ENCODE measurements at regions of chr19 and their contacts with region 1.

Region 1: DNA sequence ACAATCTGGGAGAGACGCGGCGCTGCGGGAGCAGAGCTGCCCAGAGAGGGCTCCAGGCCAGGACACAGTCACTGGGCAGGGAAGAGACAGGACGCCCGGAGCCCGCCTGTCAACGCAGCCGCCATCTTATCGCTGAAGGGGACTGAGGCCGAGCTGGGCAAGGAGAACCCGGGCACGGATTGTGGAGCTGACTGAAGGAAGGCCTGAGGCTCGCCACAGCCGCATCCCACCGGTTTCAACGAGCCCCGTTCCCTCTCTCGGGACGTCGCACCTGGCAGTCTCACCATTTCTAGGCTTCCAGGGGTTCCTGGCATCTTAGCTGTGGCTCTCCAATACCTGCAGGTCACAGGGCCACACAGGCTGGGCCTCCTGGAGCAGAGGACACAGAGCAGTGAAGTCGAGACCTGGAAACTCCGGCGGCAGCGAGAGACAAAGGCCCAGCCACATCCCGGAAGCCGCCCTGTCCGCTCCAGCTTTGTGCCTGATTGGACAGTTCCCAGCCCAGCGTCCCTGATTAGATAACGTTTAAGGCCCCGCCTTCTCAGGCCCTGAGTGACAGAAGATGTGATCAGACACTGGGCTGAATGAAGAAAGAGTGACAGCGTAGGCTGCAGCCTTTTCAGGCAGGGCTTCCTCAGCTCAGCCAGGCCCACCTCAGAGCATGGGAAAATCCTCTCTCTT is at the start of gene ZNF91:
- DNase-seq: peak; percentile 80
- H3K4me3 ChIP-seq: peak within 1 kb of the TSS; percentile 56
- H3K27ac ChIP-seq: peak within 1 kb of the TSS; percentile 85
- H3K4me1 ChIP-seq: no peaks in the 10 kb centered on the region
- H3K27me3 ChIP-seq: no peaks in the 10 kb centered on the region
- CTCF ChIP-seq: no peak
- total RNA-seq, gene ZNF91: 7.0 and 8.9 TPM in 2 replicates

Region 2: DNA sequence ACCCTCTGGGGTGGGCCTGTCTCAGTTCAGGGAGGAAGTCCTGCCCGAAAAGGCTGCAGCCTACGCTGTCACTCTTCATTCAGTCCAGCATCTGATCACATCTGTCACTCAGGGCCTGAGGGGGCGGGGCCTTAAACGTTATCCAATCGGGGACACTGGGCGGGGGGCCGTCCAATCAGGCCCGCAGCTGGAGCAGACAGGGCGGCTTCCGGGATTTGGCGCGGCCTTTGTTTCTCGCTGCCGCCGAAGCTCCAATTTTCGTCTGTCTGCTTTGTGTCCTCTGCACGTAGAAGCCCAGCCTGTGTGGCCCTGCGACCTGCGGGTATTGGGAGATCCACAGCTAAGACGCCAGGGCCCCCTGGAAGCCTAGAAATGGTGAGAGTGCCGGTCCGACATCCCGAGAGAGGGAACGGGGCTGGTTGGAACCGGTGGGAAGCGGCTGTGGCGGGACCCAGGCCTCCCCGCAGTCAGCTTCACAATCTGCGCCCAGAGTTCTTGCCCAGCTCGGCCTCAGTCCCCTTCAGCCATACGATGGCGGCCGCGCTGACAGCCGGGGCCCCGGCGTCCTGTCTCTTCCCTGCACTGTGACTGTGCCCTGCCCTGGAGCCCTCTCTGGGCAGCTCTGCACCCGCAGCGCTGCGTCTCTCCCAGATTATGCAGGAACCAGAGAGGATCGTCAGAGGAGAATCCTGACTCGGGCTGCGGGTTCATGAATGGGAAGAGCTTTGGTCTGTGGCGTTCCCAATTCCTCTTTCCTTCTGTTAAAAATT is 278.2 kb before region 1 on chr19 and contains the start of gene ZNF730:
- CTCF ChIA-PET with region 1: no interaction called
- POLR2A ChIA-PET with region 1: interaction called, 10 read pairs
- intact Hi-C with region 1: no loop called
- DNase-seq: peak; percentile 65
- H3K4me3 ChIP-seq: peak within 1 kb of the TSS; percentile 56
- H3K27ac ChIP-seq: peak within 1 kb of the TSS; percentile 66
- H3K4me1 ChIP-seq: no peaks in the 10 kb centered on the region
- H3K27me3 ChIP-seq: no peaks in the 10 kb centered on the region
- CTCF ChIP-seq: no peak
- total RNA-seq, gene ZNF730: 7.6 and 8.7 TPM in 2 replicates